ENCODE measurements at regions of chr15 and their contacts with region 1.

Region 1: DNA sequence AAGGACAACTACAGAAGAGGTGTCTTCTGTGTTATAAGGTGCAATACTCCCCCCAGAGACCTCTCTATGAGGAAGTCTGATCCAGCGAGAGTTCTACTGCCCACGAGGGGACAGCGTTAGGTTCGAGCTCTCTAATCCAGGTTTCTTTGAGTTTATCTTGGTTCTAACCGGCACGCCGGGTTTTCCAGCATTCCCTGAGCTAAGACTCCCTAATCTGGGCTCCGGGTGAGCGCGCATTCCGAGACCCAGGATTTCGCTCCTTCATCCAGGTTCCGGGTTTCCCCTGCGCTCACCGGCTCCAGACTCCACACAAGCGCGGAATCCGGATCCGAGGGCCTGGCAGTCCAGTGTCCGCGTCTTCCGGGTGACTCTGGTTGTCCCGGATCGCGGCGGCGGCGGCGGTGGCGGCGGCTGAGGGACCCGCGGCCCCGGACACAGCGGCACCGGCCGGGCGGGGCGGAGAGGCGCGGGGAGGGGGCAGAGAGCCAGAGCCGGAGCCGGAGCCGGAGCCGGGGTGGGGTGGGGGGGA is at the start of gene ZNF609:
- DNase-seq: peak; percentile 89
- ATAC-seq: peak; percentile 86
- H3K4me3 Mint-ChIP-seq: peak within 1 kb of the TSS; percentile 92
- H3K27ac Mint-ChIP-seq: peak within 1 kb of the TSS; percentile 81
- H3K4me1 Mint-ChIP-seq: peaks cover 67% of the 10 kb centered on the region
- H3K27me3 Mint-ChIP-seq: no peaks in the 10 kb centered on the region
- CTCF ChIP-seq: no peak
- total RNA-seq, gene ZNF609: 25.9 and 28.6 TPM in 2 replicates

Region 2: GRCh38 chr15:64381000-64381752 is 79.1 kb before region 1 on chr15 and contains the start of gene PCLAF:
- CTCF ChIA-PET with region 1: no interaction called
- POLR2A ChIA-PET with region 1: no interaction called
- intact Hi-C with region 1: loop called (anchors 2 kb)
- DNase-seq: peak; percentile 74
- ATAC-seq: peak; percentile 100
- H3K4me3 Mint-ChIP-seq: peak within 1 kb of the TSS; percentile 92
- H3K27ac Mint-ChIP-seq: peak within 1 kb of the TSS; percentile 44
- H3K4me1 Mint-ChIP-seq: peaks cover 20% of the 10 kb centered on the region
- H3K27me3 Mint-ChIP-seq: no peaks in the 10 kb centered on the region
- CTCF ChIP-seq: no peak
- total RNA-seq, gene PCLAF: 2.0 and 3.9 TPM in 2 replicates

Region 3: GRCh38 chr15:64387562-64388168 is 72.6 kb before region 1 on chr15 and contains the start of gene TRIP4:
- CTCF ChIA-PET with region 1: no interaction called
- POLR2A ChIA-PET with region 1: interaction called, 11 read pairs
- intact Hi-C with region 1: no loop called
- DNase-seq: peak; percentile 92
- ATAC-seq: peak; percentile 100
- H3K4me3 Mint-ChIP-seq: peak within 1 kb of the TSS; percentile 98
- H3K27ac Mint-ChIP-seq: peak within 1 kb of the TSS; percentile 94
- H3K4me1 Mint-ChIP-seq: peaks cover 25% of the 10 kb centered on the region
- H3K27me3 Mint-ChIP-seq: no peaks in the 10 kb centered on the region
- CTCF ChIP-seq: no peak
- total RNA-seq, gene TRIP4: 26.3 and 35.0 TPM in 2 replicates

Region 4: DNA sequence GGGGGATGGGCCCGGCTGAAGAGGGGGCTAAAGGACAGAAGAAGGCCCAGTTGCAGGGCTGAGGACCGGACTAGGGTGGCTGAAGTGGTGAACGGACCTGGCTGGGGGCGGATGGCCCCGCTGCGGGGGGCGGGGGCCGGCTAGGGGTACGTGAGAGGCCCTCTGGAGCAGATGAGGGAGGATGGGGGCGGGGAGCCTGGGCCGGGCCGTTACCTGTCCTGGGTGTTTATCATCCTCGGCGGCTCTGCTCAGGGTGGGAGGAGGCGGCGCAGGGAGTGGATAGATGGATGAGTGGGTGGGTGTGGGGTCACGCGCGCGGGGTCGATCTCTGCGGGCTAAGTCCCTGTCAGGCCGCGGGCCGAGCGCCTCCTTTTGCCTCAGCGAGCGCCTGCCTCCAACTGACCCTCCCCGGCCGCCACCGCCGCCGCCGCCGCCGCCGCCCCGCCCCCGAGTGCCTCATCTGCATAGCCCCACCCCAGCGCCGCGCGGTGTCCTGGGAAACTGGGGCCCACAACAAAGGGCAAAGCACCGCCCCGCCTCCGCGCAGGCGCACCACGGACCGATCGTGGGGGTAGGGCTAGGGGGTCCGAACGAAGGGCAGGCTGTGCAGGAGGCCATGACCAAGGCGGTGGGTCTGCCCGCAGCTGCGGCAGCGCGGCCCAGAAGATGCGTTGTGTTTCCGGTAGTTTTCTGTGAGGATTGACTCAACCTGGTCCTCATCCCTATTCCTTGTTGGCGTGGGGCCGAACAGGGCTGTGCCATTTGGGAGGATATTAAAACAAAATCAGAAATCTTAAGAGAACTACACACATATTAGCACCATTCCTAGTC is 242.8 kb after region 1 on chr15:
- CTCF ChIA-PET with region 1: no interaction called
- POLR2A ChIA-PET with region 1: no interaction called
- intact Hi-C with region 1: loop called (anchors 1 kb)
- DNase-seq: peak; percentile 96
- ATAC-seq: peak; percentile 94
- H3K4me3 Mint-ChIP-seq: peak overlapping the region; percentile 89
- H3K27ac Mint-ChIP-seq: peak overlapping the region; percentile 82
- H3K4me1 Mint-ChIP-seq: peaks cover 53% of the 10 kb centered on the region
- H3K27me3 Mint-ChIP-seq: no peaks in the 10 kb centered on the region
- CTCF ChIP-seq: no peak